ENCODE measurements at regions of chr12 and their contacts with region 1.

Region 1: DNA sequence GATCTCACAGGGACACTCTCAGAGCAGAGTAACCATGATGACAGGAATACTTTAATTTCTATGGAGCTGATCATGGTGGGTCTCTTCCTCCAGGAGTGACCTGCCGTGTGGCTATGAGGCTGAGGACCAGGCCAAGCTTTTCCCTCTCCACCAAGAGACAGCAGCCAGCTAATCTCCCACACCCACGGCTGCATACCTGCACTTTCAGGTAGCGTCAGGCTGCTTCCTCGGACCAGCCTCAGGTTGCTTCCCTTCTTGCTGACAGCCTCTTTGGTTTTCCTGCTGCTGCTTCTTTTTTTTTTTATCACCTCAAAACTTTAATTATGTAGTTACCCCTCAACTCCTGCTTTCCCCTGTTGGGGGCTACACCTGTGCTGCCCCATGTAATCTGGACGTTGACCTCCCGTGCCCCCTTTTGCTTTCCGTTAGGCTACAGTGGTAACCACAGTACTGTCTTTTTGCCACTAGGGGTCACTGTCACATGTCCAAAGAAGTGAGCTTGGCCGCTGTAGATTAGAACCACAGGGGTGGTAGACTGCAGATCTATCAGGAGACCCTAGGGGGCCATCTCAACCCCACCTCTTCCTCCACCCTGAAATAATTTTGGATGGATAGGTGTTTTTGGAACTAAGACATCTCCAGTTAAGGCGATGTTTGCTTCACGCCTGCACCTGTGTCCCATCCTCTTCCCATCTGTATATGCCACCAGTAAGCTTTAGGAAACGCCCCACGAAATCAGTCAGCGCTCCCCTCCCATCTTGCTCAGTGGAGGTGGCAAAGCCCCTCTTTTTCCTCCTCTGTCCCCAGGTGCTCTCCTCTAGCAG is 7.8 kb upstream of the PIP4K2C start:
- DNase-seq: peak; percentile 92
- H3K4me3 ChIP-seq: no peak overlapping the region; a peak in 1 of 4 replicates
- H3K27ac ChIP-seq: no peak overlapping the region
- H3K4me1 ChIP-seq: no peaks in the 10 kb centered on the region
- H3K27me3 ChIP-seq: no peaks in the 10 kb centered on the region
- CTCF ChIP-seq: peak; percentile 98
- EP300 ChIP-seq: no peak
- RAD21 ChIP-seq: peak; percentile 97

Region 2: GRCh38 chr12:57534991-57535543 is 48.2 kb before region 1 on chr12:
- CTCF ChIA-PET with region 1: interaction called, 11 read pairs
- POLR2A ChIA-PET with region 1: no interaction called
- DNase-seq: no peak
- H3K4me3 ChIP-seq: no peak overlapping the region
- H3K27ac ChIP-seq: no peak overlapping the region
- H3K4me1 ChIP-seq: no peaks in the 10 kb centered on the region
- H3K27me3 ChIP-seq: no peaks in the 10 kb centered on the region
- CTCF ChIP-seq: no peak
- EP300 ChIP-seq: no peak
- RAD21 ChIP-seq: no peak

Region 3: GRCh38 chr12:57552835-57553313 is 30.3 kb before region 1 on chr12:
- CTCF ChIA-PET with region 1: interaction called, 24 read pairs
- POLR2A ChIA-PET with region 1: no interaction called
- DNase-seq: no peak
- H3K4me3 ChIP-seq: peak overlapping the region in 1 of 2 experiments; percentile 24; a peak in 1 of 4 replicates
- H3K27ac ChIP-seq: peak overlapping the region; percentile 13 to 40; a peak in 2 of 4 replicates
- H3K4me1 ChIP-seq: peaks cover 4 to 33% of the 10 kb centered on the region in 2 experiments; a peak in 3 of 4 replicates
- H3K27me3 ChIP-seq: no peaks in the 10 kb centered on the region
- CTCF ChIP-seq: no peak
- EP300 ChIP-seq: no peak
- RAD21 ChIP-seq: no peak

Region 4: GRCh38 chr12:57604454-57604991 is 21.3 kb after region 1 on chr12 and contains the start of gene DTX3:
- CTCF ChIA-PET with region 1: interaction called, 65 read pairs
- POLR2A ChIA-PET with region 1: interaction called, 3 read pairs
- DNase-seq: peak; percentile 84
- H3K4me3 ChIP-seq: peak within 1 kb of the TSS; percentile 86 to 91
- H3K27ac ChIP-seq: peak within 1 kb of the TSS; percentile 61 to 97
- H3K4me1 ChIP-seq: peaks cover 9 to 17% of the 10 kb centered on the region in 2 experiments; a peak in 3 of 4 replicates
- H3K27me3 ChIP-seq: no peaks in the 10 kb centered on the region
- CTCF ChIP-seq: no peak
- EP300 ChIP-seq: no peak
- RAD21 ChIP-seq: no peak
- polyA plus RNA-seq, gene DTX3: 61.2 and 62.6 TPM in 2 replicates

Region 5: DNA sequence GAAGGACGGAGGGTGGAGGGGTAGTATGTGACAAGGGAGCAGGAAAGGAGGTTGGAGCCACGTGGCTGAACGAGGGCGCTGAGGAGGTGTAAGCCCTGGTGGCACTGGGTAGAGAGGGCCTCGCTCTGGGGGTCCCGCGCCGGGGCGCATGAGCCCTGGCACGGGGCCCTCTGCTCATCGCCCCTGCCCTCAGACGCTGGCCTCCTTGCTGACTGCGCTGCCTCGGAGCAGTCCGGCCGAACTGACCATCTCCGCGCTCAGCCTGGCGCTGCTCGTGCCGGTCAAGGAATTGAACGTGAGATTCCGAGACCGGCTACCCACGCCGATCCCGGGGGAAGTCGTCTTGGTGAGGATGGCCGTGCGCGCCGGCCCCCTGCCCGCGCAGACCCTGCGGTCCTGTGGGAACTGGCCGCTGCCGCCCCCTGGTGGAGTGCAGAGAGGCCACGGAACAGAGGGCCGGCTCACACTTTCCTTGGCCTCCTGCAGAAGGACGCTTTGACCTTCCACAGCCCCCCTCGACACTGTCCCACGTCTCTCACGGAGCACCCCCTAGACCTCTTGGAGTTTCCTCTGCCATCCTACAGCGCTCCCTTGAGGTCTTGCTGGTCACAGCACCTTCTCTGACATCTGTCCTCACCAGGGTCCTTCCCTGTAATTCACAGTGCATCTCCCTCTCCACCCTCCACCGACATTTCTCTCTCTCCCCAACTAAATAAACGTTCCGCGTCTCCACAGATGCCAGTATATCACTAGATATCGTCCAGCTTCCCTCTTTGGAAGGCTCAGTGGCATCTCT is 38.5 kb after region 1 on chr12:
- CTCF ChIA-PET with region 1: interaction called, 298 read pairs
- POLR2A ChIA-PET with region 1: interaction called, 5 read pairs
- DNase-seq: peak; percentile 96
- H3K4me3 ChIP-seq: peak overlapping the region in 1 of 2 experiments; percentile 41; a peak in 1 of 4 replicates
- H3K27ac ChIP-seq: no peak overlapping the region
- H3K4me1 ChIP-seq: peaks cover 0 to 7% of the 10 kb centered on the region in 2 experiments; a peak in 1 of 4 replicates
- H3K27me3 ChIP-seq: no peaks in the 10 kb centered on the region
- CTCF ChIP-seq: peak; percentile 88
- EP300 ChIP-seq: no peak
- RAD21 ChIP-seq: peak; percentile 76

Region 6: DNA sequence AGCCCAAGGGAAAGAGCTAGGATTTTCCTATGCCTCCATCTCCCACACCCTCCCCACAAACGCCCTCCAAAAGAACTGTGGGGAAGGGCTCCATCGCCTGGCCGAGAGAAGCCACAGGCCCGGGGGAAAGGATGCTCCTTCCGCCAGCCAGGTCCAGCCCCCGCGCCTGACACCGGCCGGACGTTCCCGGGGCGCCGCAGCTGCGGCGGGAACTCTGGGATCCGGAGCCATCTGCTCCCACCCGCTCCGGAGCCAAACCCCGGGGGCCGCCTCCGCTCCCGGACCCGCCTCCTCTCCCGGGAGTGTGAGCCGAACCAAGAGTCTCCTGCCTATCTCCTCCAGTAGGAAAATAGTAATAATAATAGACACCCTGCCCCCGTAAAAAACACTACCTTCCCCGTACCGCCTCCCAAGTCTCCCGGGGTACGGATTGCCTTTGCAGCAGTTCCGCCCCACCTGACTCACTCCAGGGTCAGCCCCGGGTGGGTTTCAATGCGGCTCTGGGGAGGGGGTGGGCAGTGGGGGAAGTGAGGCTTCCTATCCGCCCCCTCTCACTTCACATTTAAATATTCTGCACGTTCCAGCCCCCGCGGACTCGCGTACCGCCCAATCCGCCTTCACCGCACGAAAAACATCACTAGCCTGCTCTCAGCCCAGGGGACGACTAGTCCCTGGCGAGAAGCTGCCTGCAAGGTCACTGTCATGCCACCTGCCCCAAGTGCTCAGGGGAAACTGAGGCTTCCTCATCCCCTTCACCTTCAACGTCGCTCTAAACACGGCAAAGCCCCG is 152.9 kb after region 1 on chr12:
- CTCF ChIA-PET with region 1: interaction called, 59 read pairs
- POLR2A ChIA-PET with region 1: no interaction called
- DNase-seq: peak; percentile 87
- H3K4me3 ChIP-seq: peak overlapping the region; percentile 29 to 32; a peak in 3 of 4 replicates
- H3K27ac ChIP-seq: peak overlapping the region in 1 of 2 experiments; percentile 39; a peak in 1 of 4 replicates
- H3K4me1 ChIP-seq: peaks cover 0 to 29% of the 10 kb centered on the region in 2 experiments; a peak in 2 of 4 replicates
- H3K27me3 ChIP-seq: no peaks in the 10 kb centered on the region
- CTCF ChIP-seq: peak; percentile 53
- EP300 ChIP-seq: no peak
- RAD21 ChIP-seq: peak; percentile 69

Region 7: GRCh38 chr12:57823908-57824640 is 240.9 kb after region 1 on chr12:
- CTCF ChIA-PET with region 1: no interaction called
- POLR2A ChIA-PET with region 1: no interaction called
- DNase-seq: no peak
- H3K4me3 ChIP-seq: no peak overlapping the region
- H3K27ac ChIP-seq: no peak overlapping the region
- H3K4me1 ChIP-seq: no peaks in the 10 kb centered on the region
- H3K27me3 ChIP-seq: no peaks in the 10 kb centered on the region
- CTCF ChIP-seq: no peak
- EP300 ChIP-seq: no peak
- RAD21 ChIP-seq: no peak

Region 8: DNA sequence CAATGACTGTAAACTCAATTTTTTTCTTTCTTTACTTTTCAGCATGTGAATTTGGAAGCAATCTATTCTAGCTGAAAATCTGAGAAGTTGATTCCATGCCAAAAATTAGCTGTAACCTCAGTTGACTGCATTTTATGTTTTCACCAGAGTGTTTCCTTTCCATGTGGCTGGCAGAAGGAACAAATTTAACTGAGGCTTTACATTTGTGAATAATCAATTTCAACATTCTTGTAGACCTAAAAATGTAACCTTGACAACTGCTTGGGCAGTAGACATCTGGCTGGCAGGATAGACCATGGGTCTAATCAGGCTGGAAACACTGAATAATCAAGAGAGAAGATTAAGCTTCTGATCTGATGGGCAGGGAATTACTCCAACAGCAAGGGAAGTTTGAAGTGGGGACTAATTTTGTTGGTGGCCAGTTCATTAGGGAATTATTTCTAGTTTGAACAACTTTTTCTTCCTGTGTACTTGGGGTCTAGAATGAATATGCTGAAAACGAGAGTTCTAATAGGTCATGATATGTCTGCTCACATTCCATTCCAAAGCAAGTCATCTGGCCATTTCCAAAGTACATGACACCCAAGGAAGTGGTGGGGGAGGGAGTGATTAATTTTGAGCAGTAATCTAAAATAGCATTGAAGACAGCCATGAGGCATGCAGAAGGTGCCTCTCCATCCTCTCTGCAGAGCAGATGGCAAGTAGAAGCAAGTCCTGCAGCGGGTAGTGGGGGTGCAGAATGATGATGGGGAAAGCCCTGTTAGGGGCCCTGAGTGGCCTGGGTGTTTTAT is 426.4 kb after region 1 on chr12:
- CTCF ChIA-PET with region 1: no interaction called
- POLR2A ChIA-PET with region 1: no interaction called
- DNase-seq: no peak
- H3K4me3 ChIP-seq: no peak overlapping the region
- H3K27ac ChIP-seq: no peak overlapping the region
- H3K4me1 ChIP-seq: no peaks in the 10 kb centered on the region
- H3K27me3 ChIP-seq: no peaks in the 10 kb centered on the region
- CTCF ChIP-seq: no peak
- EP300 ChIP-seq: no peak
- RAD21 ChIP-seq: no peak

Region 9: GRCh38 chr12:58766513-58766870 is 1183.3 kb after region 1 on chr12:
- CTCF ChIA-PET with region 1: no interaction called
- POLR2A ChIA-PET with region 1: no interaction called
- DNase-seq: no peak
- H3K4me3 ChIP-seq: no peak overlapping the region
- H3K27ac ChIP-seq: no peak overlapping the region
- H3K4me1 ChIP-seq: no peaks in the 10 kb centered on the region
- H3K27me3 ChIP-seq: no peaks in the 10 kb centered on the region
- CTCF ChIP-seq: no peak
- EP300 ChIP-seq: no peak
- RAD21 ChIP-seq: no peak

Measured in SK-N-SH (cell line).